Heart right ventricle (tissue), 16 donors: ENCODE measurements at regions of chr12 and their contacts with region 1.

Region 1: DNA sequence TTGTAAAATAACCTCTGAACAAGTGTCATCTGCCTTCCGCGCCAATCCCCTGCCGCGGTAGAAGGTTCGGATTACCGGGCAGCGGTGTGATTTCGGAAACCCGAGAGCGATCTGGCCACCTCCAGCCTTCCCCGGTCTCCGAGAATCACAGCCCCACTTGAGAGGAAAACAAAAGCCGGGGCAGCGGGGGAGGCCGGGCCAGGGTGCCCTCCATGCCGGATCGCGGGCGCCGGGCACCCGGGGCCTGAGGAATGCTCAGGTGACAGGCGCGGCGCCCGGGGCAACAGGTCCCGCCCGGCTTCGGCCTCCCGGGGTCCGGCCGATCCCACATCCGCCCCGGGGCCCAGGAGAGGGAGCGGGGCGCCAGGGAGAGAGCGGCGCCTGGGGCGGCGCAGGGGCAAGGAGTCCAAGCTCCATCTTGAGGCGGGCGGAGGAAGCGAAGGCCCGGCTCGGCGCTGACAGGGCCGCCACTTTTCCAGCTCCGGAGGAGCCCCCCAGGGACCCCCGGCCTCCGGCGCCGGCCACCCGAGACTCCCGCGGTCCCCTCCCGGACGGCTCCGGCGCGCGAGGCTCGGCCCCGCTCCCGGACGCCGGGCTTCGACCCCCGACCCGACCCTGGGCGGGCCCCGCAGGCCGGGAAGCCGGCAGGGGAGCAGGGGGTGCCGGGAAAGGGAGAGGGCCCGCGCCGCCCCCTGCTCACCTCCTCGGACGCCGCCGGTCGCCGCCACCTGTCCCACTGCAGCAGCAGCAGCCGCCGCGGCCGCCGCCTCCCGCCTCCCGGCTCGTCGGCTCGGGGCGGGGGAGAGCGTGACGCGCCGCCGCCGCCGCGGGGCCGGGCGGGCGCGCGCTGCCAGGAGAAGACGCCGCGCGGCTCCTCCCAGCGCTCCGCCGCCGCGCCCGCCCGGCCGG is at the start of gene CLIP1:
- DNase-seq: peak; percentile 57 to 71
- ATAC-seq: peak; percentile 78 to 93 (median 88)
- H3K4me3 ChIP-seq: peak within 1 kb of the TSS; percentile 43 to 100 (median 95)
- H3K27ac ChIP-seq: peak within 1 kb of the TSS; percentile 96 to 100 (median 98)
- H3K4me1 ChIP-seq: peaks cover 12 to 45% (median 27%) of the 10 kb centered on the region in 9 donors
- H3K27me3 ChIP-seq: no peaks in the 10 kb centered on the region
- CTCF ChIP-seq: peak in 8 of 9 donors; percentile 31 to 66 (median 50)
- total RNA-seq, gene CLIP1: 87.4 to 135 (median 100) TPM

Region 2: GRCh38 chr12:122399592-122400373 is 22.3 kb before region 1 on chr12:
- intact Hi-C with region 1: loop called in 1 of 10 experiments (anchors 2 kb)
- DNase-seq: peak; percentile 25 to 76
- ATAC-seq: peak; percentile 81 to 93 (median 91)
- H3K4me3 ChIP-seq: peak overlapping the region in 7 of 10 donors; percentile 11 to 35 (median 28)
- H3K27ac ChIP-seq: peak overlapping the region; percentile 38 to 92 (median 86)
- H3K4me1 ChIP-seq: peaks cover 3 to 42% (median 19%) of the 10 kb centered on the region in 9 donors
- H3K27me3 ChIP-seq: no peaks in the 10 kb centered on the region
- CTCF ChIP-seq: peak; percentile 41 to 81 (median 67)

Region 3: DNA sequence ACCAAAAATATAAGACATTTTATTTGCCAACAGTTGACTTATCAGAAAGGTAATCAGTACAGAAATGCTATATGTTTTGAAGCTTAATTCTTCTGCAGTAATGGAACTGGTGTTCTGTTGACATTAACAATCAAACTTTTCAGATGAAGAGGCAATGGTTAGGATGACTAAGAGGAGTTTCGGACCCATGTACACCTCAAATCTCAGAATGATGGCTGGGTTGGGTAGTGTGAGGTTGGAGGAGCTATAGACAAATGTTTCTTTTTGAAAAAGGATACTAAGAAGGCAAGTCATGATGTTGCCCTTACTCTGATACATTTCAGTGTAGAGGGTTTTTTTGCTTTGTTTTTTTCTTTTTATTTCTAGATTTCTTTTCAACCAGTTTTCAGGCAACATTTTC is 171.8 kb after region 1 on chr12:
- intact Hi-C with region 1: no loop called
- DNase-seq: no peak
- ATAC-seq: no peak
- H3K4me3 ChIP-seq: no peak overlapping the region
- H3K27ac ChIP-seq: no peak overlapping the region
- H3K4me1 ChIP-seq: no peaks in the 10 kb centered on the region
- H3K27me3 ChIP-seq: no peaks in the 10 kb centered on the region
- CTCF ChIP-seq: no peak